Left cardiac atrium (tissue), 4 donors: ENCODE measurements at regions of chr12 and their contacts with region 1.

Region 1: DNA sequence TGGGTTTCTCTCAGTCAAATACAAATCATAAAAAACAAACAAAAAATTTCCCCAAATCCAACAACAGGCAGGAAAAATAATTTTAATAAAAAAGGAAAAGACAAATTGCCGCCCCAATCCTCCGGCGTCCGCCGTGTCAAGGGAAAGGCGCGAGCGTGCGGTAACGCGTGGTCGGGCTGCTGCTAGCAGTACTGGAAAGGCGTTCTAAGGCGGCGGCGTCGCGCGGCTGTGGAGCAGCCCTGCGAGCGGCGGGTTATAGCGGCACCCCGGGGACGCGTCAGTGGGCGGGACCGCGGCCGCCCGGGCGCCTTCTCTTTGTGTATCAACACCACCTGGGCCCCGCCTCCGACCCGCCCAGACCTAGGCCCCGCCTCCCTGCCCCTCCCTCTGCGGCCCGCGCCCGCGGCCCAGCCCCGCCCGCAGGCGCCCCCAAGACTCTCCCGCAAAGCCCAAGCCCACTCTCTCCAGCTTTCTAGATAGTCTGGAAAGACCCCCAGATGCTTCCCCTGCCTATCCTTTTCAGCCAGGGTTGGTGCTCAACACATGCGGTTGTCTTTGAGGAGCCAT is at the start of gene SLC38A2:
- DNase-seq: peak; percentile 98
- ATAC-seq: peak; percentile 94 to 96
- total RNA-seq, gene SLC38A2: 122 to 202 TPM

Region 2: GRCh38 chr12:45990468-45991283 is 382.0 kb before region 1 on chr12 and contains the start of gene SCAF11:
- intact Hi-C with region 1: loop called in 1 of 2 experiments (anchors 5 kb)
- DNase-seq: peak; percentile 100
- ATAC-seq: peak; percentile 94 to 95
- total RNA-seq, gene SCAF11: 74.7 to 89.2 TPM

Region 3: GRCh38 chr12:46556105-46556559 is 183.5 kb after region 1 on chr12:
- intact Hi-C with region 1: loop called in 1 of 2 experiments (anchors 5 kb)
- DNase-seq: no peak
- ATAC-seq: peak; percentile 82 to 87

Region 4: GRCh38 chr12:46915082-46915481 is 542.5 kb after region 1 on chr12:
- intact Hi-C with region 1: no loop called
- DNase-seq: peak; percentile 27
- ATAC-seq: peak; percentile 76 to 94